T-cell (primary cell): ENCODE measurements at regions of chr14 and their contacts with region 1.

Region 1: GRCh38 chr14:70907176-70907995 is at the start of gene PCNX1:
- DNase-seq: peak; percentile 86 to 94 (median 90)
- ATAC-seq: peak; percentile 78 to 82 (median 80)
- H3K4me3 ChIP-seq: peak within 1 kb of the TSS; percentile 76 to 98
- H3K4me3 Mint-ChIP-seq: peak within 1 kb of the TSS; percentile 88 to 94 (median 93)
- H3K27ac ChIP-seq: peak within 1 kb of the TSS; percentile 90
- H3K27ac Mint-ChIP-seq: peak within 1 kb of the TSS; percentile 95 to 99
- H3K4me1 ChIP-seq: peaks cover 15 to 17% of the 10 kb centered on the region in 2 experiments
- H3K4me1 Mint-ChIP-seq: peaks cover 52 to 68% (median 64%) of the 10 kb centered on the region in 3 donors
- H3K27me3 ChIP-seq: no peaks in the 10 kb centered on the region
- H3K27me3 Mint-ChIP-seq: no peaks in the 10 kb centered on the region
- total RNA-seq, gene PCNX1: 80.8 to 140 (median 86.3) TPM

Region 2: DNA sequence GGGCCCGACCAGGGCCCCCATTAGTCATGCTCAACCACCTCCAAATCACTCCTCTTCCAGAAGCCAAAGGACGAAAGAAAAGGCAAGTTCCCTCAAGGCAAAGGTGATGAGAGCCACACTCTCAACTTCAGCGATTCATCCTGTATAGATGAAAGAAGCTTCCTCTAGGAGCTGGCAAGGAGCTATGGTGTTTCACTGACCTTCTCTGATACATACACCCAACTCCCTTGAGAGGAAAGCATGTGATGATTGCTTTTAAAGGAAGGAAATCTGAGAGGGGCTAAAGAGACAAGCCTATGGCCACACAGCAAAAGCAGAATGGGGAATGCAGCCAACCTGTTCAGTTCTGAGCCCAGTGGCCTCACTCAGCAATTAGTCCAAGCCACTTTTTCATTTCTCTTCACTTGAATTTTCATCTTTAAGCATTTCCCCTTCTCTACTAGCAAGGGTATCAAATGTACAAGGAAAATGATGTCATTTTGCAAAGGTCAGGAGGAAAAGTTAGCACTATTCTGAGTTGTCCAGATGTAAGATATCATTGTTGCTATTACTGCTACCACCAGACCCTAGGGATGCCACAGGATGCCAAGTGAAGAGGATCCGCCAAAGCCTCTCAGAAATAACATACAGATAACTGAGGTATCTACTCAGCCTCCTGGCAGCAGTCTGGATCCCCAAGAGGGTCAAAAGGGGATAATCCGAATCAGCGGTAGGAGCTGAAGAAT is 180.6 kb before region 1 on chr14:
- CTCF ChIA-PET with region 1: no interaction called
- POLR2A ChIA-PET with region 1: no interaction called
- DNase-seq: no peak
- ATAC-seq: no peak
- H3K4me3 ChIP-seq: no peak overlapping the region
- H3K4me3 Mint-ChIP-seq: no peak overlapping the region
- H3K27ac ChIP-seq: no peak overlapping the region
- H3K27ac Mint-ChIP-seq: no peak overlapping the region
- H3K4me1 ChIP-seq: no peaks in the 10 kb centered on the region
- H3K4me1 Mint-ChIP-seq: no peaks in the 10 kb centered on the region
- H3K27me3 ChIP-seq: no peaks in the 10 kb centered on the region
- H3K27me3 Mint-ChIP-seq: no peaks in the 10 kb centered on the region

Region 3: GRCh38 chr14:70816525-70816924 is 90.9 kb before region 1 on chr14:
- CTCF ChIA-PET with region 1: interaction called, 4 to 26 read pairs
- POLR2A ChIA-PET with region 1: no interaction called
- DNase-seq: no peak
- ATAC-seq: no peak
- H3K4me3 ChIP-seq: no peak overlapping the region
- H3K4me3 Mint-ChIP-seq: no peak overlapping the region
- H3K27ac ChIP-seq: no peak overlapping the region
- H3K27ac Mint-ChIP-seq: no peak overlapping the region
- H3K4me1 ChIP-seq: peaks cover 2 to 12% of the 10 kb centered on the region in 2 experiments
- H3K4me1 Mint-ChIP-seq: peaks cover 8 to 11% (median 11%) of the 10 kb centered on the region in 3 donors
- H3K27me3 ChIP-seq: peaks cover 2 to 8% of the 10 kb centered on the region in 2 experiments
- H3K27me3 Mint-ChIP-seq: peaks cover 9 to 13% of the 10 kb centered on the region in 2 donors

Region 4: DNA sequence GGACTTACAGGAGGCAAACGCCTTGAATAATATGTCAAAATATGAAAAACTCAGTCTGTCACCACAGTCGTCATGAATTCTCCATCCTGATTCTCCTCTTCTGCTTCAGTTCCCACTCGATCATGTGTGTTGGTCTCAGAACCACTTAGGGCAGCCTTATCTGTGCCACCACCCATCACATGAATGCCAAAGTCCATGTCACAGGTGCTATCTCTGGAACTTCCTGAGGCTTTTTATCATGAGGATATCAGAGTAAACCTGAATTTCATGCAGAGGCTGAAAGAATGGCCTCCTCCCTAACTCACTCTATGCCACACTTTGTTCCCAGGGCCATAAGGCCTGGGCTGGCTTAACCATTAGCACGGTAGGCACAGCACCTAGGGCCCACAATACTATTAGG is 69.3 kb before region 1 on chr14:
- CTCF ChIA-PET with region 1: no interaction called
- POLR2A ChIA-PET with region 1: no interaction called
- DNase-seq: no peak
- ATAC-seq: no peak
- H3K4me3 ChIP-seq: no peak overlapping the region
- H3K4me3 Mint-ChIP-seq: no peak overlapping the region
- H3K27ac ChIP-seq: no peak overlapping the region
- H3K27ac Mint-ChIP-seq: no peak overlapping the region
- H3K4me1 ChIP-seq: no peaks in the 10 kb centered on the region
- H3K4me1 Mint-ChIP-seq: no peaks in the 10 kb centered on the region
- H3K27me3 ChIP-seq: no peaks in the 10 kb centered on the region
- H3K27me3 Mint-ChIP-seq: no peaks in the 10 kb centered on the region

Region 5: GRCh38 chr14:70887207-70887681 is 20.1 kb before region 1 on chr14:
- CTCF ChIA-PET with region 1: interaction called, 4 to 16 read pairs
- POLR2A ChIA-PET with region 1: interaction called, 3 to 8 read pairs
- DNase-seq: peak in 1 of 35 experiments; percentile 31
- ATAC-seq: peak in 1 of 4 experiments; percentile 51
- H3K4me3 ChIP-seq: peak overlapping the region in 1 of 2 donors; percentile 2
- H3K4me3 Mint-ChIP-seq: peak overlapping the region; percentile 52 to 73 (median 60)
- H3K27ac ChIP-seq: peak overlapping the region; percentile 71
- H3K27ac Mint-ChIP-seq: peak overlapping the region; percentile 90 to 95
- H3K4me1 ChIP-seq: peaks cover 10 to 60% of the 10 kb centered on the region in 2 experiments
- H3K4me1 Mint-ChIP-seq: peaks cover 75 to 91% (median 89%) of the 10 kb centered on the region in 3 donors
- H3K27me3 ChIP-seq: no peaks in the 10 kb centered on the region
- H3K27me3 Mint-ChIP-seq: no peaks in the 10 kb centered on the region

Region 6: DNA sequence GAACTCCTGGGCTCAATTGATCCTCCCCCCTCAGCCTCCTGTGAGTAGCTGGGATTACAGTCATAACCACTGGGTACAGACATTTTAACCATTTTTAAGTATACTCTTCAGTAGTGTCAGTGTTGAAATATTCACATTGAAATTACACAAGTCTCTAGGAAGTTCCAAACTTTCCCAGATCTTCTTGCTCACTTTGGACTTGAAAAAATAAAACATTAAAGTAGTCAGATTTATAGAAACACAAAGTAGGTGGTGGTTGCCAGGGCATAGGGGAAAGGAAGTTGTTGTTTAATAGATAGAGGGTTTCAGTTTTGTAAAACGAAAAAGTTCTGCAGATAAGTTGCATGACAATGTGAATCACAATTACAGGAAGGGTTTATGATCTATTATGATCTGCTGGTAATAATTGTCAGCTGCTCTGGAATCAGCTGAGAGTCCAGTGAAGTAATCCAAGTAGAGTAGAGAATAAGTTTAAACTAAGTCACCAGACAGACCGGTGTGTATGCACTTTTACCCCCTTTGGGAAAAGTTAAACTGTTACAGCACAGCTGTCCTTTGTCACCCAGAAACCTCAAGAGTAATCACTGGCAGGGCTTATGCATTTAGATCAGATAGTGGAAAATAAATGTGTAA is 27.2 kb after region 1 on chr14:
- CTCF ChIA-PET with region 1: interaction called in 1 of 2 experiments, 17 read pairs
- POLR2A ChIA-PET with region 1: interaction called in 1 of 2 experiments, 4 read pairs
- DNase-seq: peak in 1 of 35 experiments; percentile 33
- ATAC-seq: peak; percentile 81 to 86 (median 83)
- H3K4me3 ChIP-seq: no peak overlapping the region
- H3K4me3 Mint-ChIP-seq: peak overlapping the region; percentile 59 to 67 (median 64)
- H3K27ac ChIP-seq: peak overlapping the region; percentile 66
- H3K27ac Mint-ChIP-seq: peak overlapping the region; percentile 89 to 91
- H3K4me1 ChIP-seq: peaks cover 11% of the 10 kb centered on the region in 2 experiments
- H3K4me1 Mint-ChIP-seq: peaks cover 83 to 89% (median 84%) of the 10 kb centered on the region in 3 donors
- H3K27me3 ChIP-seq: no peaks in the 10 kb centered on the region
- H3K27me3 Mint-ChIP-seq: no peaks in the 10 kb centered on the region

Region 7: GRCh38 chr14:70955543-70956480 is 48.4 kb after region 1 on chr14:
- CTCF ChIA-PET with region 1: interaction called, 29 to 129 read pairs
- POLR2A ChIA-PET with region 1: interaction called in 1 of 2 experiments, 3 read pairs
- DNase-seq: peak; percentile 18 to 76 (median 45)
- ATAC-seq: peak; percentile 72 to 94 (median 79)
- H3K4me3 ChIP-seq: no peak overlapping the region
- H3K4me3 Mint-ChIP-seq: no peak overlapping the region
- H3K27ac ChIP-seq: no peak overlapping the region
- H3K27ac Mint-ChIP-seq: peak overlapping the region; percentile 54 to 74
- H3K4me1 ChIP-seq: peaks cover 0 to 10% of the 10 kb centered on the region in 2 experiments
- H3K4me1 Mint-ChIP-seq: peaks cover 41 to 47% (median 44%) of the 10 kb centered on the region in 3 donors
- H3K27me3 ChIP-seq: no peaks in the 10 kb centered on the region
- H3K27me3 Mint-ChIP-seq: no peaks in the 10 kb centered on the region

Region 8: DNA sequence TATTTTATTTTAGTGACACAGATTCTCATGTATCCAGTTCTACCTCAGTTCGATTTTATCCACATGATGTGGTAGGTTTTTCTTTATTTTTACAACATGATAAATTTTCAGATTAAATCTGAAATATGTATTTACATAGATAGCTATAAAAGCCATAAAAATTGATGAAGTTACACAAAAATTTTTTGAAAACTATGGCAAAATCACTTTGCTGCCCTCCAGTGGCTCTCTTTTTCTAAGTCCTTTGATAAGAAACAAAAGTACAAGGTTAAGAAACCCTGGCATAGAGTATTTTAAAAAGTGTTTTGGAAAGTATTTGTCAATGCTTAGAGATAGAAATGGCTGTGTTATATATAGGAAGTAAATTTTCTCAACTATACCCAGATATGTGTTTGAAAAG is 104.1 kb after region 1 on chr14:
- CTCF ChIA-PET with region 1: interaction called, 3 to 19 read pairs
- POLR2A ChIA-PET with region 1: no interaction called
- DNase-seq: peak in 5 of 35 experiments; percentile 3 to 30 (median 18)
- ATAC-seq: no peak
- H3K4me3 ChIP-seq: no peak overlapping the region
- H3K4me3 Mint-ChIP-seq: no peak overlapping the region
- H3K27ac ChIP-seq: no peak overlapping the region
- H3K27ac Mint-ChIP-seq: peak overlapping the region; percentile 23 to 29
- H3K4me1 ChIP-seq: peaks cover 0 to 2% of the 10 kb centered on the region in 2 experiments
- H3K4me1 Mint-ChIP-seq: peaks cover 42 to 57% (median 49%) of the 10 kb centered on the region in 3 donors
- H3K27me3 ChIP-seq: no peaks in the 10 kb centered on the region
- H3K27me3 Mint-ChIP-seq: no peaks in the 10 kb centered on the region

Region 9: DNA sequence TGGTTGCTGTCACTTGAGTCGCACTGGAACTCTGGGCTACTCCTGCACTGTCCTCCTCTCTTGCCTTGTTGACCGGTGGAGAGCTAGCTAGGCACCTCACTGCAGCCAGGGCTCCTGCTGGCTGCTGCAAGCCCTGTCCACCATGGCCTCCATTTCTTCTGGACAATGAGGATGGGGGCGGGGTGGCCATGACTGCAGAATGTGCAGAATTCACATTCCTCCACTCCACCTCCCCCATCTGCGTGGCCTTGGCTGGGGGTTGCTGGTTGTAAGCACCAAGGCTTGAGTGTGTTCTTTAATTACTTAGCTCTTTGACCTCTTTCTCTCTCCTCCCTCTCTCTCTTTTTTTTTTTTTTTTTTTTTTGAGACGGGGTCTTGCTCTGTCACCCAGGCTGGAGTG is 248.4 kb after region 1 on chr14:
- CTCF ChIA-PET with region 1: no interaction called
- POLR2A ChIA-PET with region 1: no interaction called
- DNase-seq: no peak
- ATAC-seq: no peak
- H3K4me3 ChIP-seq: no peak overlapping the region
- H3K4me3 Mint-ChIP-seq: no peak overlapping the region
- H3K27ac ChIP-seq: no peak overlapping the region
- H3K27ac Mint-ChIP-seq: no peak overlapping the region
- H3K4me1 ChIP-seq: no peaks in the 10 kb centered on the region
- H3K4me1 Mint-ChIP-seq: no peaks in the 10 kb centered on the region
- H3K27me3 ChIP-seq: peaks cover 0 to 4% of the 10 kb centered on the region in 2 experiments
- H3K27me3 Mint-ChIP-seq: peaks cover 4 to 8% of the 10 kb centered on the region in 2 donors